ENCODE measurements at regions of chr2 and their contacts with region 1.

Region 1: GRCh38 chr2:201345625-201346213 is 11.4 kb downstream of the FLACC1 start:
- DNase-seq: no peak
- H3K4me3 ChIP-seq: no peak overlapping the region
- H3K27ac ChIP-seq: peak overlapping the region; percentile 22
- H3K4me1 ChIP-seq: peaks cover 24% of the 10 kb centered on the region
- H3K27me3 ChIP-seq: no peaks in the 10 kb centered on the region
- CTCF ChIP-seq: no peak

Region 2: DNA sequence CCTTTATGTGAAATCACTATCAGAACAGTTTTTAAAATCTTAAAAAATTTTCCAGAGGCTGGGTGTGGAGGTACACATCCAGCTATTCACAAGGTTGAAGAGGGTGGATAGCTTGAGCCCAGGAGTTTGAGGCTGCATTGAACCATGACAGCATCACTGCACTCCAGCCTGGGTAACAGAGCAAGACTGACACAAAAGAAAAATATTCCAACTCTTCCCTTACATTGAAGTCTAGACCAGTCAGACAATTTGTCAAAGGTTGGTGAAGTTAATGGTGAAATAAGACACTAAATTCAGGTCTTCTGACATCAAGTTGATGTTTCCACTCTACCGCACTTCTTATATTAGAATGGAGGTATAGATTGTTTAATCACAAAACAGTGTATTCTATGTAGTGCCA is 327.1 kb before region 1 on chr2:
- intact Hi-C with region 1: no loop called
- DNase-seq: no peak
- H3K4me3 ChIP-seq: no peak overlapping the region
- H3K27ac ChIP-seq: no peak overlapping the region
- H3K4me1 ChIP-seq: peaks cover 27% of the 10 kb centered on the region
- H3K27me3 ChIP-seq: no peaks in the 10 kb centered on the region
- CTCF ChIP-seq: no peak

Region 3: GRCh38 chr2:201071479-201072200 is 274.1 kb before region 1 on chr2 and contains the starts of genes HYCC2 and NDUFB3:
- intact Hi-C with region 1: no loop called
- DNase-seq: peak; percentile 89
- H3K4me3 ChIP-seq: peak within 1 kb of the TSS; percentile 95
- H3K27ac ChIP-seq: peak within 1 kb of the TSS; percentile 93
- H3K4me1 ChIP-seq: peaks cover 89% of the 10 kb centered on the region
- H3K27me3 ChIP-seq: no peaks in the 10 kb centered on the region
- CTCF ChIP-seq: peak; percentile 58
- total RNA-seq, gene HYCC2: 11.5 TPM
- total RNA-seq, gene NDUFB3: 466 TPM

Region 4: DNA sequence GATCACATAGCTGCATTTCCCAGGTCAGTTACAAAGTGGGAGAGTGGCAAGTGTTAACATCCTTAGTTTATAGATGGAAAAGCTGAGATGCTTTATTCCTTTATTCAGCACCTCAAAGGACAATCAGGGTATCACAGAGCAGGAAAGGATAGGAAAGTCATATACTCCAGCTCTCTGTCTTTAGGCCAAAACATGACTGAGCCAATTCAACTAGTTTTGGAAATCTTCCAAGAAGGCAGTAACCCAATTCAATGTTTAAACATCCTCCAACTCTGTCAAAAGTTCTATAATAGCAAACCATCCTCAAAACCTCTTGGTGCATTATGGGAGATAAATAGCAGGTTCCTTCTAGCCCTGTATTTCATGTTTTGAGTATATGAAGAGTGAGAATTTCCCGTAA is 60.2 kb before region 1 on chr2:
- intact Hi-C with region 1: loop called (anchors 2 kb)
- DNase-seq: no peak
- H3K4me3 ChIP-seq: no peak overlapping the region
- H3K27ac ChIP-seq: no peak overlapping the region
- H3K4me1 ChIP-seq: no peaks in the 10 kb centered on the region
- H3K27me3 ChIP-seq: no peaks in the 10 kb centered on the region
- CTCF ChIP-seq: no peak